Activated T-helper 1 cell treated with anti-CD3 and anti-CD28 coated beads, Interleukin-12 subunit alpha, Interleukin-12 subunit beta, Interleukin-2, Interleukin-4 antibody, amounts not matched to agents 30 ng/mL and 10 ng/mL and 1 ng/mL, durations not matched to agents 14 hours and 24 hours and 36 hours (primary cell): ENCODE measurements at regions of chr3 and their contacts with region 1.

Region 1: DNA sequence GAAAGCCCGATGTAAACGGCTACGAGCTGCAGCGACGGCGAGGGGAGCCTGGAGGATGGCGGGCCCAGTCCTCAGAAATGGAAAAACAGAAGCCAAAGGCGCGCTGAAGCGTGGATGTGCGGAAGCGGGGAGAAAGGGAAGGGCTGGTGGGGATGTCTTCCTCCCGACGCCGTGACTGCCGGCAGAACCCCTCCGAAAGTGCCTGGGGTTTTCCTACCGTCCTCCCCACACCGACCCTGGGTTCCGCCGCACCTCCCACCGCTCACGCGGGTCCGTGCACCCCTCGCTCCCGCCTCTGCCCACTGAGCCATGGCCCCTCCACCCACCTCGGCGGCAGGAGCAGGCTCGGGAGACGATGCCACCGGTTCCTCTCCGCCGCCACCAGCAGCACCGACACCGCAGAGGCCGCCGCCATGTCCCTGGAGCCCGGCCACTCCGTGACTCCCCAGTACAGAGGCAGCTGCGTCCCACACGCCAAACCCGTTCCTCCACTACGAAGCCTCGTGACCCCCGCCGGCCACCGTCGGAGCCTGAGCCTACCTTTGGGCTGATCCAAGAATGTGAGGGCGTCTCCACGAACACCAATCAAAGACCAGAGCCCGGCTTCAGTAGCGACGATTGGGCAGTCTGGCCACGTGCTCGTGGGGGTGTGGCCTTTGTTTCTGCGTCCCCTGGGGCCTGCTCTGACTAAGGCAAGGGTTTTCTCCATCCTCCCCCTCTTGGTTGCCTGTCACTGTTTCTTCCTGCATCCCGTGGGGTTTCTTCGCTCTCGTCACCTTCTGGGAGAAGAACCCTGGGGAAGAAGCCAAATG is at the start of gene MCCC1:
- DNase-seq: peak; percentile 97
- H3K4me3 Mint-ChIP-seq: peak within 1 kb of the TSS; percentile 97
- H3K27ac Mint-ChIP-seq: peak within 1 kb of the TSS; percentile 92
- H3K4me1 Mint-ChIP-seq: peaks cover 41% of the 10 kb centered on the region
- H3K27me3 Mint-ChIP-seq: no peaks in the 10 kb centered on the region
- total RNA-seq, gene MCCC1: 27.3 and 30.0 TPM in 2 replicates

Region 2: DNA sequence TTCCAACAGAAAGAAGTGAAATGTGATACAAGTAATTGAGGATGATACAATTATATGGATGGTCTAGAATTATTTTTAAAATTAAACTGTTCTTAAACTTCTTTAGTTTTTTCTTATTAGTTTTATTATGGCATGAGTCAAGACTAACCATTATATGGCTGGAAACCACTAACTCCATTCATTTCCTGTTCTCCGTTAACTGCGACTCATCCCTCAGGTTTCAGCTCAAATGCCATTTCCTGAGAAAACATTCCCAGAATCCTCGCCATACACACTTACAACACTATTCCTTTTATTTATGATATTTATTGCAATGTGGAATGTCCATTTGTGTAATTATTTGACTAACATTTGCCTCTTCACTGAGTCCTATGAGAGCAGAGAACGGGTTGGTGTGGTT is 993.4 kb before region 1 on chr3:
- intact Hi-C with region 1: no loop called
- DNase-seq: no peak
- H3K4me3 Mint-ChIP-seq: no peak overlapping the region
- H3K27ac Mint-ChIP-seq: no peak overlapping the region
- H3K4me1 Mint-ChIP-seq: no peaks in the 10 kb centered on the region
- H3K27me3 Mint-ChIP-seq: no peaks in the 10 kb centered on the region

Region 3: DNA sequence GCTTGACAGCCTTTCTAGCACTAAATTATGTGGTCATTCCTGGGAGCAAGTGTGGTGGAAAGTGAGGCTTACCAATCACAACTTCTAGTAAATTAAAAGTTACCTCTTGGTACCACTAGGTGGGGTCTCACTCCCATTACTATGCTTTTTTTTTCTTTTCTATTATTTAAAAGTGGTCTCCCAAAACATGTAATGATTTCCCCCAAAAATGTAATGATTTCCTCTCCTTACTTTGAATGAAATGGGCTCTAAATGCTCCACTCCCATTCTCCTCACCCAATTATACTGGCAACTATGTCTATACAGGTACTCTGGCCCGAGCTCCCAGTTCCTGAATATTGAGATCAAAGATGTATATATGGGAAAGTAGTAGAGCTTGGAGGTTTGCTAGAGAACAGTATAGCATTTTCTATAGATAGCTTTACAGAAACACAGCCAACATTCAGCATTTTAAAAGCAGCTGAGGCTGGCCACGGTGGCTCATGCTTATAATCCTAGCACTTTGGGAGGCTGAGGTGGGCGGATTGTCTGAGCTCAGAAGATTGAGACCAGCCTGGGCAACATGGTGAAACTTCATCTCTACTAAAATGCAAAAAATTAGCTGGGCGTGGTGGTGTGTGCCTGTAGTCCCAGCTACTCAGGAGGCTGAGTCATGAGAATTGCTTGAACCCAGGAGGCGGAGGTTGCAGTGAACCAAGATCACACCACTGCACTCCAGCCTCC is 189.8 kb before region 1 on chr3:
- intact Hi-C with region 1: loop called (anchors 2 kb)
- DNase-seq: no peak
- H3K4me3 Mint-ChIP-seq: no peak overlapping the region
- H3K27ac Mint-ChIP-seq: no peak overlapping the region
- H3K4me1 Mint-ChIP-seq: peaks cover 43% of the 10 kb centered on the region
- H3K27me3 Mint-ChIP-seq: no peaks in the 10 kb centered on the region

Region 4: DNA sequence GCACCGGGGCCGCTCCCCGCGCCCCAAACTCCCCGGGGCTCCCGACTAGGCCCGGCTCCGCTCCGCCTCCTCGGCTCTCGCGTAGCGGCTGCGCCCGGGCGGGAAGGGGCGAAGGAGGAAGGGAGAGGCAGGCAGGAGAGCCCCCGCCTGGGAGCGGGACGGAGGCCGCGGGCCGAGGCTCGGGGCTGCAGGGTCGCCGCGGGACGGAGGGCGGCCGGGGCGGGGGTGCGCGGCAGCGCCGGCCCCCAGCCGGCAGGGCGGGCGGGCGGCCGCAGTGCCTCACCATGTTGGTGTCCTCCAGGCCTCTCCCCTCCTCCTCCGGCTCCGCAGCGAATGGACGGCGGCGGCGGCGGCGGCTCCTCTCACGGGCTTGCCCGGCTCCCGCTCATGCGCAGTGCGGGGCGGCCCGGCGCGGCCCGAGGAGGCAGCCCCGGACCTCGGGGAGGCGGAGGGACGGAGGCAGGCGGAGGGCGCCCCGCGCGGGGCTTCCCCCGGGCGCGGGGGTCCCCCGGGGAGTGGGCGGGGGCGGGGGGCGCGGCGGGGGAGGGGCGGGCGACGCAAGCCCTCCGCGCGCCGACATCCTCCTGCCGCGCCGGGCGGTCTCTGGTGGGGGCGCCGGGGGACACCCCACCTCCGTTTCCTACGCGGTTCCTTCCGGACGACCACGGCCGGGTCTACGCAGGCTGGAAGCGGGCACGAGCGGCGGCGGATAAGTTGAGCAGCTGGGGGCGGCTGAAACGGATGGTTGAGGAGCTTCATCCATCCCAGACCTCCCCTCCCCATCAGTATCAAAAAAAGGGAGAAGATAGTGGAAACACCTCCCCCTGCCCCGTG is 118.8 kb before region 1 on chr3 and contains the start of gene DCUN1D1:
- intact Hi-C with region 1: loop called (anchors 1 kb)
- DNase-seq: peak; percentile 89
- H3K4me3 Mint-ChIP-seq: peak within 1 kb of the TSS; percentile 95
- H3K27ac Mint-ChIP-seq: peak within 1 kb of the TSS; percentile 90
- H3K4me1 Mint-ChIP-seq: peaks cover 26% of the 10 kb centered on the region
- H3K27me3 Mint-ChIP-seq: no peaks in the 10 kb centered on the region
- total RNA-seq, gene DCUN1D1: 63.2 and 67.2 TPM in 2 replicates

Region 5: DNA sequence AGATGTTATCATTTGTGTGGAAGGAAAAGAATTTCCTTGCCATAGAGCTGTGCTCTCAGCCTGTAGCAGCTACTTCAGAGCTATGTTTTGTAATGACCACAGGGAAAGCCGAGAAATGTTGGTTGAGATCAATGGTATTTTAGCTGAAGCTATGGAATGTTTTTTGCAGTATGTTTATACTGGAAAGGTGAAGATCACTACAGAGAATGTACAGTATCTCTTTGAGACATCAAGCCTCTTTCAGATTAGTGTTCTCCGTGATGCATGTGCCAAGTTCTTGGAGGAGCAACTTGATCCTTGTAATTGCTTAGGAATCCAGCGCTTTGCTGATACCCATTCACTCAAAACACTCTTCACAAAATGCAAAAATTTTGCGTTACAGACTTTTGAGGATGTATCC is 551.3 kb after region 1 on chr3:
- intact Hi-C with region 1: no loop called
- DNase-seq: no peak
- H3K4me3 Mint-ChIP-seq: no peak overlapping the region
- H3K27ac Mint-ChIP-seq: no peak overlapping the region
- H3K4me1 Mint-ChIP-seq: no peaks in the 10 kb centered on the region
- H3K27me3 Mint-ChIP-seq: no peaks in the 10 kb centered on the region

Region 6: GRCh38 chr3:183697610-183698317 is 598.5 kb after region 1 on chr3 and contains the start of gene YEATS2:
- intact Hi-C with region 1: loop called (anchors 1 kb)
- DNase-seq: peak; percentile 65
- H3K4me3 Mint-ChIP-seq: peak within 1 kb of the TSS; percentile 88
- H3K27ac Mint-ChIP-seq: peak within 1 kb of the TSS; percentile 94
- H3K4me1 Mint-ChIP-seq: peaks cover 37% of the 10 kb centered on the region
- H3K27me3 Mint-ChIP-seq: no peaks in the 10 kb centered on the region
- total RNA-seq, gene YEATS2: 54.2 and 57.4 TPM in 2 replicates